ENCODE measurements at regions of chr7 and their contacts with region 1.

Region 1: GRCh38 chr7:88546808-88547207 is 212.7 kb upstream of the ZNF804B start:
- DNase-seq: peak in 1 of 2 experiments; percentile 37
- H3K4me3 ChIP-seq: no peak overlapping the region
- H3K27ac ChIP-seq: no peak overlapping the region
- H3K4me1 ChIP-seq: no peaks in the 10 kb centered on the region
- H3K27me3 ChIP-seq: no peaks in the 10 kb centered on the region
- CTCF ChIP-seq: peak; percentile 86

Region 2: GRCh38 chr7:88586219-88586618 is 39.4 kb after region 1 on chr7:
- CTCF ChIA-PET with region 1: no interaction called
- POLR2A ChIA-PET with region 1: no interaction called
- intact Hi-C with region 1: no loop called
- DNase-seq: no peak
- H3K4me3 ChIP-seq: no peak overlapping the region
- H3K27ac ChIP-seq: no peak overlapping the region
- H3K4me1 ChIP-seq: no peaks in the 10 kb centered on the region
- H3K27me3 ChIP-seq: no peaks in the 10 kb centered on the region
- CTCF ChIP-seq: no peak

Region 3: DNA sequence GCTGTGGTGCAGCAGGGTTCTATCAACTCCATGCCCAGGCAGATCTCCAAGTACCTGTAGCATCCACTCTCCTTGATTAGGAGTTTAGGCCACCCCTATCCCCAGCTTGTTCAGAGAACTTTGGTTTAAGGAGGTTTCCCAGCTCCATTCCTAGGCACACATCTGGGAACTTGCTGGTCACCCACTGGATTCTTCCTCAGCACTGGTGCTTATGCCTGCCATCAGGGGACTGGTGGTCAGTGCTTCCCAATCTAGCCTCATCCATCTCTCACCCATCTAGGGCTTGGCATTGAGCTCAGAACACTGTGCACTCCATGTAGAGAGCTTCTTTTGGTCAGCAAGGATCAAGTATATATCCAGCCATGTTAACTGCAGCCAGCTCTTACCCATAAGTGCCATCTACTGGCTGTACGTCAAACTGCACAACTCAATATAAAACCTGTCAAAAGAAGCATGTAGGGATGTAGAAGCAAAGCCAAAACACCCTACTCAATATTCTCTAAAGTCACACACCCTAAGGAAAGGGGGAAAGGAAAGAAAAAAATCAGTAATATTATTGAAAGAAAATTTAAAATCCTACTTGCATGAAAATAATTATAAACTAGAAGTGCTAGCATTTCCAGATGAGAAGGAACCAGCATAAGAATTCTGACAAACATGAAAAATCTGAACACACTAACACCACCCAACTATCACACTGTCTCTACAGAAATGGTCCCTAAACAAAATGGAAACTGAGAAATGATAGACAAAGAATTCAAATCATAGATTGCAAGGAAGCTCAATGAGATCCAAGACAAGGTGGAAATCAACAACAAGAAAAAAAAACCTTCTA is 1076.2 kb after region 1 on chr7:
- CTCF ChIA-PET with region 1: no interaction called
- POLR2A ChIA-PET with region 1: no interaction called
- intact Hi-C with region 1: loop called (anchors 2 kb)
- DNase-seq: peak in 1 of 2 experiments; percentile 12
- H3K4me3 ChIP-seq: no peak overlapping the region
- H3K27ac ChIP-seq: no peak overlapping the region
- H3K4me1 ChIP-seq: no peaks in the 10 kb centered on the region
- H3K27me3 ChIP-seq: no peaks in the 10 kb centered on the region
- CTCF ChIP-seq: peak; percentile 75

Region 4: DNA sequence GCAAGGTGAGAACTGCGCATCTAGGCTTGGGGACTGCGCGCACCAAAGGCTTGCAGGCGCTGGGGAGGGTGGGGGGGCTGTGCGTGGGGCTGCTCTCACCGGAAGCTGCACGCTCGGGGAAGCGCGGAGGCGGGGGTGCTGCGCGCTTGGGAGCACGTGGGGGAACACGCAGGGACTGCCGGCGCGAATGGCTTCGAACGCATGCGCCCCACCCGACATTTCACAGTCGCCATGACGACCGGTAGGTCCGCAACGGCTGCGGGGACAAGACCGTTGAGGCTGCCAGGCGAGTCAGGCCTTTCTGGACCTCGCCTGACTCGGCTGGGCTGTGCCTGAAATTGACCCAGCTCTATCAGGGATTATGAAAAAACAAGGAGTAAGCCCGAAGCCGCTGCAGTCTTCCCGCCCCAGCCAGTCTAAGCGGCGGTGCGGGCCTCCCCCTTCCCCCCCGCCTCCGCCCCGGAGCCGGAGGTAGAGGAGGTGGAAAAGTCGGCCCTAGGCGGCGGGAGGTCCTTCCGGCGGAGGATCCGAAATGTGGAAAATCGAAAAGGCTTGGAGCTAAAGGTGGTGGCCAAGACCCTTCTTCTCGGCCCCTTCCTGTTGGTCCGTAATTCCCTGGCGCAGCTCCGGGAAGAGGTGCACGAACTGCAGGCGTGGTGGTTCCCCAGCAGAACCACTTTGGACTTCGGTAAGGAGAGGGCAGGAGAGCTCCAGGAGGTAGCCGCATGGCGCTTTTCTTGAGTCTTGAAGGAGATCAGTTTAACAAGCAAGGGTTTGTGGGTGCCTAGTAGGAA is 1572.6 kb after region 1 on chr7:
- CTCF ChIA-PET with region 1: no interaction called
- POLR2A ChIA-PET with region 1: no interaction called
- intact Hi-C with region 1: loop called (anchors 5 kb)
- DNase-seq: peak in 1 of 2 experiments; percentile 1
- H3K4me3 ChIP-seq: no peak overlapping the region
- H3K27ac ChIP-seq: no peak overlapping the region
- H3K4me1 ChIP-seq: no peaks in the 10 kb centered on the region
- H3K27me3 ChIP-seq: no peaks in the 10 kb centered on the region
- CTCF ChIP-seq: no peak

Region 5: DNA sequence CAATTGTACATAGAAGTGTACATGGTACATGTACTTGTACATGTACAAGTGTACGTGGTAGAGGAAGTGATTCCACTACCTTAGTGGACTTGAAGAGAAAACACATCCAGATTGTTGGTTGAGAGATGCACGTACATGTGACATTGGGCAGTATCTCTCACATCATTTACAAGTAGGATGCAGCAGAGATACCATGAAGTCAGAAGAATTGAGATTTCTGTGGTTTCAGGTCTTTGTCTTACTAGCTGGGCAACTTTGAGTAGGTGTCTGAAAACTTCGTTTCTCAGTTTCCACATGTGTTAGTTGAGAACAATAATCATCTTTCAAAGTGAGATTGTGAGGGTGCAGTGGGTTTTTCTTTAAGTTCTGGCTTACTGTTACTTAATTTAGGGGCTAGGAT is 1877.9 kb after region 1 on chr7:
- CTCF ChIA-PET with region 1: no interaction called
- POLR2A ChIA-PET with region 1: no interaction called
- intact Hi-C with region 1: loop called (anchors 2 kb)
- DNase-seq: no peak
- H3K4me3 ChIP-seq: no peak overlapping the region
- H3K27ac ChIP-seq: no peak overlapping the region
- H3K4me1 ChIP-seq: 0 out of 2 replicates have a peak, but pooled peaks cover 8% of the 10 kb centered on the region
- H3K27me3 ChIP-seq: no peaks in the 10 kb centered on the region
- CTCF ChIP-seq: no peak

Measured in PC-9 (cell line).